Activated T-helper 1 cell treated with anti-CD3 and anti-CD28 coated beads, Interleukin-12 subunit alpha, Interleukin-12 subunit beta, Interleukin-2, Interleukin-4 antibody, amounts not matched to agents 30 ng/mL and 10 ng/mL and 1 ng/mL, durations not matched to agents 14 hours and 24 hours and 36 hours (primary cell): ENCODE measurements at regions of chr4 and their contacts with region 1.

Region 1: DNA sequence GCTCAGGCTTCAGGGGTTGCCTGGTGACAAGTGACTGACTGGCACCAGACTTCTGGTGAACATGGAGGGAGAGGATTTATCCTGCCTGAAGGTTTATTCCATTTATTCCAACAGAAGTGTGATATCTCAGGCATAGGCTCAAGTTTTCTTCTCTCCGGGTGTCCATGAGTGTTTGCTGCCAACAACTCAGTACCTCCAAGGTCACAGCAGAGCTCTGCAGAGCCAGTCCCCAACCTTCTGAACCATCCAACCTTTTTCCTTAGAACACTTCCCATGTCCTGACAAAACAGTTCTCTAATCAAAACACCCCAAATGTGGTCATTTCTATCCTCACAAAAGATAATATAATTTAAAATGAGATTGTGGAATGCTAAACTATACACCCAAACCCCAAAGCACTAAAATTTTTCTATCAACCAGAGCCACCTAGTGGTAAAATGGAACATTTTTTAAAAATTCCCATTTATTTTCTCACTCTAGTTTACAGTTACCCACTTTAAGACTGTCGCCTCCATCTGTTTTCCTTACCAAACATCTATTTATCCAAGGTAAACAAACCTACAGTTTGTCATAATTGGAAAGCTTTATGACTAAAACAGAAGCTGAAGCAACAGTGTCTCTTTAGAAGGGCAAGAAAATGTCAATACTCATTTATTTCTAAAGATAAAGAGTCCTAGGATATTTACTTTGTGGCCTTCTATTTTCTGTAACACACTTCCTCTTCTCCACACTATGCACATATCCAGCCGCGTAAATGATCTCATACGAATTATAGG is 39.6 kb downstream of the TMEM154 start:
- DNase-seq: no peak
- H3K4me3 Mint-ChIP-seq: no peak overlapping the region
- H3K27ac Mint-ChIP-seq: no peak overlapping the region
- H3K4me1 Mint-ChIP-seq: peaks cover 42% of the 10 kb centered on the region
- H3K27me3 Mint-ChIP-seq: no peaks in the 10 kb centered on the region

Region 2: GRCh38 chr4:152408514-152409327 is 231.5 kb before region 1 on chr4:
- intact Hi-C with region 1: loop called (anchors 1 kb)
- DNase-seq: no peak
- H3K4me3 Mint-ChIP-seq: no peak overlapping the region
- H3K27ac Mint-ChIP-seq: no peak overlapping the region
- H3K4me1 Mint-ChIP-seq: peaks cover 18% of the 10 kb centered on the region
- H3K27me3 Mint-ChIP-seq: no peaks in the 10 kb centered on the region

Region 3: GRCh38 chr4:152460488-152460887 is 179.8 kb before region 1 on chr4:
- intact Hi-C with region 1: loop called (anchors 1 kb)
- DNase-seq: no peak
- H3K4me3 Mint-ChIP-seq: no peak overlapping the region
- H3K27ac Mint-ChIP-seq: peak overlapping the region; percentile 59
- H3K4me1 Mint-ChIP-seq: peaks cover 79% of the 10 kb centered on the region
- H3K27me3 Mint-ChIP-seq: no peaks in the 10 kb centered on the region

Region 4: GRCh38 chr4:152556283-152556682 is 84.0 kb before region 1 on chr4:
- intact Hi-C with region 1: loop called (anchors 5 kb)
- DNase-seq: no peak
- H3K4me3 Mint-ChIP-seq: peak overlapping the region; percentile 41
- H3K27ac Mint-ChIP-seq: peak overlapping the region; percentile 77
- H3K4me1 Mint-ChIP-seq: peaks cover 43% of the 10 kb centered on the region
- H3K27me3 Mint-ChIP-seq: no peaks in the 10 kb centered on the region

Region 5: GRCh38 chr4:152665691-152666395 is 25.6 kb after region 1 on chr4:
- intact Hi-C with region 1: no loop called
- DNase-seq: no peak
- H3K4me3 Mint-ChIP-seq: no peak overlapping the region
- H3K27ac Mint-ChIP-seq: no peak overlapping the region
- H3K4me1 Mint-ChIP-seq: peaks cover 42% of the 10 kb centered on the region
- H3K27me3 Mint-ChIP-seq: no peaks in the 10 kb centered on the region

Region 6: GRCh38 chr4:152735396-152735859 is 95.2 kb after region 1 on chr4:
- intact Hi-C with region 1: loop called (anchors 1 kb)
- DNase-seq: no peak
- H3K4me3 Mint-ChIP-seq: no peak overlapping the region
- H3K27ac Mint-ChIP-seq: no peak overlapping the region
- H3K4me1 Mint-ChIP-seq: peaks cover 4% of the 10 kb centered on the region
- H3K27me3 Mint-ChIP-seq: peaks cover 6% of the 10 kb centered on the region